ENCODE measurements at regions of chr1 and their contacts with region 1.

Region 1: DNA sequence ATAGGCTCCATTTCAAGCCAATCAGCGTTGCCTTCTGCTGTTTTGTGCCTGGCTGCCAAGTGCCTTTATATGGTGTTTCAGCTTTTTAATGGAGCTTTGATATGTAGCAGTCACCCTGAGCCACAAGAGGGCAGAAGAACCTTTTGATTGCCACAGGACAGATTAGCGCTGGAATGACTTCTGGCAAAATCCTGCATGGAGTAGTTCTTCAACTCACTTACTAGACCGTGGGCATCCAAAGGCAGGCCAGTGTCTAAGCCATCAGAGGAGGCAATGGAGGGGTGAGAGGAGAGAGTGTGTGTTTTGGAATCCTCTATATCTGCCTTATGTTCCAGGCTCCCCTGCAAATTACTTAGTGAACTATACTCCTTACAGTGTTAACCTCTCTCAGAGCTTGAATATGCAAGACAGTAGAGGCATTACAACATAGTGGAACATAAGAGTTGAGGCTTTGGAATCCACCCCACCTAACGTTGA is 56.2 kb downstream of the ST3GAL3 start:
- DNase-seq: peak; percentile 78

Region 2: DNA sequence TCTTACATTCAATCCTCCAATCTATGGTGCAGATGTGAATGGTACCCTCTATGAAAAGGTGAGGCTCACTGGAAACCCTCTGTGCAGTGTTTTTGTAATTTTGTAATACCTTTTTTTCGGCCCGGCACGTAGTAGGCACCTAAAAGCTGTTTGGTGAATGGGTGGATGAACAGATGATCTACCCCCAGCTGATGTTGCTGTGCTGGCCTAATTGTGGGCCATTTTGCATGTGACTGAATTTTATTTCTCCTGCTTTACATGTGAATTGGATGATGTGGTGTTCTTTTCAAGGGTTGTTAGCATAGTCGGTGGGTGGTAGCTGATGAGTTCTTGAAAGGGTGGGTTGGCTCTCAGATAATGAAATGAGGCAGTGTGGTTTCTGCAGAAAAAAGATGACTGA is 103.2 kb before region 1 on chr1:
- in situ Hi-C with region 1: no loop called
- DNase-seq: no peak

Region 3: DNA sequence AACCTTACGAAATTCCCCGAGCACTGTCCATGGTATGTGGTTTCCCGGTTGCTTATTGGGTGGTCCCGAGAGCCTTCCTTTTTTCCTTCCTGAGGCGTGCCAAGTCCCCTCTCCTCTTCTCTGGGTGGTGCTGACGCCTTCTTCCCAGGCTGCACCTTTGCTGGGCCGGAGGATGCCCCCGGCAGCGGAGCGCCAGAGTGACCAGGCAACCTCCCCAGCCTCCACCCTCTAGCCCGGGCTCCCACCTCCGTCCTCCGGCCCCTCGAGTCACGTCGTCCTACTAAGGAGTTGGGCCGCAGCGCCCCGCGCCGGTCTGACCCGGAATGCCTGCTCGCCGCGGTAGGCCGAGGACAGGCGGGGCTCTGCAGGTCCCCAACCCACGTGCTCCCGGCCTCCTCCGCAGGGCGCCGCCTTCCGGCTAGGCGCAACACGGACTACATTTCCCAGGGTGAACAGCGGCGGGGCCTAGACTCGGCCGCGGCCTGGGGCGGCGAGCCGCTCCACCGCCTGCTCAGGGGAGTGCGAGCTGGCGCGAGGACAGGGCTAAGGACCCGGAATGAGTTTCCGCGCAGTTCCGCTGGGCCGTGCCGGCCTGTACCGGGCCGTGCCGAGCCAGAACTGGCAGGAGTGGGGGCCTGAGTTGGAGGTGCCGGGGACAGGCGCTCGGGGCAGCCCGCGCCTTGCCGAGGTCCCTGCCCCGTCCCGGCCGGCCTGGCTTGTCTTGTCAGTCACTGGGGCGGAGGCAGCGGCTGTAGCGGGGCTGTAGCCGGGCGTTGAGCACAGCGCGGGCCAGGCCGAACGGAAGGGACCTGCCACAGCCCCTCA is 182.9 kb after region 1 on chr1 and contains the start of gene IPO13:
- in situ Hi-C with region 1: loop called (anchors 25 kb)
- DNase-seq: peak; percentile 94